ENCODE measurements at regions of chr1 and their contacts with region 1.

Region 1: DNA sequence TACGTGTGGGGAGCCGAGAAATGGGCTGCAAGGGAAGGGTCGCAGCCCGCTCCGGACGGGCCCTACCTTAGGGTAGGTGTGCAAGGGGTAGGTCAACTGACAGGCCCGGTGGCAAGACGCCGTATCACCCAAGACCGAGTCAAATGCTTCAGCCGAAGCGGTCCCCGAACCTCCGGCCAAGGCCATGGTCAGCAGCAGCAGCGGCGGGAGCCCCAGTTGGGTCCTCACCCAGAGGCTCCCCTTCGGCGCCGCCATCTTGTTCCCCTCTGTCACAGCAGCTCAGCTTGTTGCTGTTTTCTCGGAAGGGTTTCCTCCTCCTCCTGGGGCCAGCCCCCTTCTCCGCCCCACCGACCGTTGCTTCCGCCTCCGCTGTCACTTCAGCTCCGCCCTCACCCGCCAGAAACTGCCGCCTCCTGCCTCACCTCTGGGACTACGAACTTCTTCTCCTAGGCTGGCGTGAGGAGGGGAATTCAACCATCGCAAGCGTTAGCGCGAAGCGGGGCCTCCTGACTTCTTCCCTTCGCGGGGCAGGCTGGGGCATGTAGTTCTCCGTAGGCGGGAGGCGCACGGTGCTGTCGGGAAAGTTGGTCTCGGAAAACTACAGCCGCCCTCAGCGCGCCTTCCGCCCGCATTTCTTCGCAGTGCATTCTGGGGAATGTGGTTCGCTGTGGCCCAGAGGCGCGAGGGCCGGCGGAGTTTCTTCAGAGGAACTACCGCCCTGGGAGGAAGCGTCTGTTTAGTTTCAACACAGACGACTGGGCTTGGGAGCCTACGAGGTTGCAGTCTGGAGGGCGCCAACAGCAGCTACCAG is at the starts of genes TCEANC2 and TMEM59:
- DNase-seq: peak; percentile 98
- ATAC-seq: peak; percentile 96
- H3K4me3 Mint-ChIP-seq: no peak within 1 kb of the TSS
- H3K27ac Mint-ChIP-seq: no peak within 1 kb of the TSS
- H3K4me1 Mint-ChIP-seq: peaks cover 33% of the 10 kb centered on the region
- H3K27me3 Mint-ChIP-seq: no peaks in the 10 kb centered on the region
- total RNA-seq, gene TCEANC2: 14.0 to 14.2 TPM
- total RNA-seq, gene TMEM59: 99.3 to 120 TPM

Region 2: DNA sequence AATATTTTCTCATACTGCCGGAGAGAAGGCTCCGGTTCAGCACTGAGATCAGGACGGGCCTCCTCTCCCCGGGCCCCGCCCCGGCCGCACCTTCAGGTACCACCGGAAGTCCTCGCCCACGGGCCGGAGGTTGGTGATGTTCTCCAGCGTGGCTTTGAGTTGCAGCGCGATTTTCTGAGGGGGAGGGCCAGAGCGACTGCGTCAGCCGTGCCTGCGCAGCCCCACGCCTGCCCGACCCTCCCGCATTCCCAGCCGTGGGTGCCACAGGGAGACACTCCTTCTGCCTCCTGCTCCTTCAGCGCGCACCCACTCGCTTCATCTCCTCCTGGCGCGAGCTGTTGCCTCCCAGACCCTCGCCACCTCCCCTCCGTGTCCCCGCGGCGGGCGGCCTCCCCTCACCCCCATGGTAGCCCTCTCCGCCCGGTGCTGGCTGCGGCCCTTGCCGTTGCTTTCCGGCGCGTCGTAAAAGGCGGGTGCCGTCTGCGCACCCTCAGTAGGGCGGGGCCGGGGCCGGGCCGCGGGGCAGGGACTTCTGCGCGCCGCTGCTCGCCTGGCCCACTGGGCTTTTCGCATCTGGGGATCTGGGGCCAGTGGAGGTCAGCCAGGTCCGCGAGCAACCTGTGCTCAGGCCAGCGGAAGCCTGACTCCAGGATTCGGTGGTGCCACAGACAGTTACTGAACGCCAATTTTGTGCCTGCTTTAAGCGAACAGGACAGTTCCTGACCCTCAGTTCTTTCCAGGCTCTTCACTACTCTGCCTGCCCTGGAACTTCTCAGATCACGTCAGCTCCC is 832.8 kb before region 1 on chr1 and contains the start of gene CZIB:
- CTCF ChIA-PET with region 1: no interaction called
- POLR2A ChIA-PET with region 1: no interaction called
- intact Hi-C with region 1: loop called in 1 of 2 experiments (anchors 10 kb)
- DNase-seq: peak; percentile 98
- ATAC-seq: peak; percentile 95
- H3K4me3 Mint-ChIP-seq: peak within 1 kb of the TSS; percentile 87
- H3K27ac Mint-ChIP-seq: peak within 1 kb of the TSS; percentile 94
- H3K4me1 Mint-ChIP-seq: peaks cover 24% of the 10 kb centered on the region
- H3K27me3 Mint-ChIP-seq: no peaks in the 10 kb centered on the region
- total RNA-seq, gene CZIB: 45.4 to 48.7 TPM

Region 3: DNA sequence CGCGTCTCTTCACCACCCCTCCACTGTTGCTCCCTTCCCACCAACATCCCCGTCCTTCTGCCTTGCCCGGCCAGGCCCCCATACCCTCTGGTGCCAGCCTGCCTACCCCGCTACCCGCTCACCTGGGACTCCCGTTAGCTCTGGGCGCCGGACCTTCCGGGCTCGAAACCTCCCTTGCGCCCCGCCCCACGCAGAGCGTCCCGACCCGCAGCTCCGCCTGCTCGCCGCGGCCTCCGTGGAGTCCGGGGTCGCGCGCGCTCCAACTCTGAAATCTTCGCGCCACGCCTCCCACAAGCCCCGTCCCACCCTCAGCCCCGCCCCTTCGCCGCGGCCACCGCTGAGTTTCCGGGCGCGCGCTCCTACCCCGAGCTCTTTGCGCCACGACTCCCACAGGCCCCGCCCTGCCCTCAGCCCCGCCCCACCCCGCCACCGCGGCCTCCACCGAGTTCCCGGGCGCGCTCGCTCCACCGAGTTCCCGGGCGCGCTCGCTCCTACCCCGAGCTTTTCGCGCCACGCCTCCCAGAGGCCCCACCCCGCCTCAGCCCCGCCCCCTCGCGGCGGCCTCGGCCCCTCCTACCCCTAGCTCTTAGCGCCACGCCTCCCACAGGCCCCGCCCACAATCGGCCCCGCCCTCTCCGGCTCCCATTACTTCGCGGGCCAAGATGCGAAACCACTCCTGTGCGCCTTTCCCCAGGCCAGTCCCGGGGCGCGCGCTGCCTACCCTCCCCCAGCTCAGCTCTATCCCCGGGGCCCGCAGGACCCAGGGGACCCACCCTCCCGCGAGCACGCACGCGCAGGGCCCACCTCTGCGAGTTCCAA is 107.5 kb before region 1 on chr1 and contains the start of gene IFT25:
- CTCF ChIA-PET with region 1: interaction called, 3 read pairs
- POLR2A ChIA-PET with region 1: interaction called, 9 read pairs
- intact Hi-C with region 1: loop called (anchors 1 kb)
- DNase-seq: peak; percentile 99
- ATAC-seq: peak; percentile 79
- H3K4me3 Mint-ChIP-seq: peak within 1 kb of the TSS; percentile 95
- H3K27ac Mint-ChIP-seq: peak within 1 kb of the TSS; percentile 89
- H3K4me1 Mint-ChIP-seq: peaks cover 50% of the 10 kb centered on the region
- H3K27me3 Mint-ChIP-seq: no peaks in the 10 kb centered on the region
- total RNA-seq, gene IFT25: 56.6 to 62.0 TPM

Region 4: GRCh38 chr1:54400329-54400728 is 347.2 kb after region 1 on chr1:
- CTCF ChIA-PET with region 1: no interaction called
- POLR2A ChIA-PET with region 1: no interaction called
- intact Hi-C with region 1: loop called in 1 of 2 experiments (anchors 2 kb)
- DNase-seq: peak; percentile 67
- ATAC-seq: peak; percentile 70
- H3K4me3 Mint-ChIP-seq: peak overlapping the region; percentile 15
- H3K27ac Mint-ChIP-seq: peak overlapping the region; percentile 64
- H3K4me1 Mint-ChIP-seq: peaks cover 71% of the 10 kb centered on the region
- H3K27me3 Mint-ChIP-seq: no peaks in the 10 kb centered on the region

Region 5: GRCh38 chr1:54715493-54716298 is 662.6 kb after region 1 on chr1 and contains the start of gene TTC4:
- CTCF ChIA-PET with region 1: no interaction called
- POLR2A ChIA-PET with region 1: interaction called, 3 read pairs
- intact Hi-C with region 1: loop called (anchors 1 kb)
- DNase-seq: peak; percentile 91
- ATAC-seq: peak; percentile 92
- H3K4me3 Mint-ChIP-seq: peak within 1 kb of the TSS; percentile 85
- H3K27ac Mint-ChIP-seq: peak within 1 kb of the TSS; percentile 92
- H3K4me1 Mint-ChIP-seq: peaks cover 29% of the 10 kb centered on the region
- H3K27me3 Mint-ChIP-seq: no peaks in the 10 kb centered on the region
- total RNA-seq, gene TTC4: 34.4 to 36.1 TPM

Region 6: DNA sequence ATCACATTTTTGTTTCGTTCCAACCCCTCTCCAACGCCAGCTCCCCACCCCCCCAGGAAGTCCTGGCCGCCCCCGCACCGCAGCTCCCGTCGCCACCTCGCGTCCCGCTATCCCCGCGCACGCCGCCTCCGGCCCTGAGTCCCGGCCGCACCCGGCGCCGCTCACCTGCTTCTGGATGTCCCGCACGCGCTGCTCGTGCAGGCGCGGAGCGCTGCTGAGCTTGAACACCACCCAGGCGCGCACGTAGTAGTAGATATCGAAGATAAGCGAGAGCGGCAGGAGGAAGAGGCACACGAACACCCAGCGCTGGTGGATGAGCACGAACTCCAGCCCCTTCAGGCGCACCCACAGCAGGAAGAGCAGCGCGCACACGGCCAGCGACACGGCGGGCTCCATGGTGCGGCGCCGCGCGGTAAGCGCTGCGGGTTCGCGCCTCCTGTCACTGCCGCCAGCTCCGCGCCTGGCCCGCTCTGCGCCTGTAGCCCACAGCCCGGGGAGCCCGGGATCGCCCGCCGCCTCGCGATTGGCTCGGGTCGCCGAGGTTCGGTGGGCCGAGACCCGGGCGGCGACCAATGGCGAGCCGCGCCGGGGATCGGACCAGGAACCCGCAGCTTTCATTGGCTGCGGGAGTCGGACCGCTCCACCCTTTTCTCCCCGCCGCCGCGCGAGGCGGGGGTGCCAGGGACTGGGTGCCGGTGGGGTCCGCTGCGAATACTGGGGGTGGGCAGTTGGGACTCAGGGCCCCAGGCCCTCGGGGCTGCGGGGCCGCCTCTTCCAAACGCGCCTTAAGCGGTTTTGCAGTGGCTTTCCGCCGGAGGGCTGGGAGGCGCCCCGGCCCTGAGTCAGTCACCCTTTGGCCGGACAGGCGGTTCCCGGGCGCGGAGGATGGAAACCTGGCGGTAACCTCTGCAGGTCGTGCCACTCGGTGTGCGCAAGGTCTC is 833.9 kb after region 1 on chr1 and contains the start of gene DHCR24:
- CTCF ChIA-PET with region 1: no interaction called
- POLR2A ChIA-PET with region 1: no interaction called
- intact Hi-C with region 1: loop called in 1 of 2 experiments (anchors 2 kb)
- DNase-seq: peak; percentile 88
- ATAC-seq: peak; percentile 96
- H3K4me3 Mint-ChIP-seq: peak within 1 kb of the TSS; percentile 89
- H3K27ac Mint-ChIP-seq: peak within 1 kb of the TSS; percentile 84
- H3K4me1 Mint-ChIP-seq: peaks cover 39% of the 10 kb centered on the region
- H3K27me3 Mint-ChIP-seq: peaks cover 8% of the 10 kb centered on the region
- total RNA-seq, gene DHCR24: 78.4 to 80.6 TPM

Measured in activated CD4-positive, alpha-beta T cell treated with anti-CD3 and anti-CD28 coated beads for 36 hours (primary cell).